ENCODE measurements at regions of chr2 and their contacts with region 1.

Region 1: GRCh38 chr2:80073134-80073561 is 231.4 kb downstream of the LRRTM1 start:
- DNase-seq: peak; percentile 73
- ATAC-seq: peak; percentile 67
- H3K4me3 ChIP-seq: no peak overlapping the region
- H3K27ac ChIP-seq: no peak overlapping the region
- H3K4me1 ChIP-seq: peaks cover 6% of the 10 kb centered on the region
- H3K27me3 ChIP-seq: no peaks in the 10 kb centered on the region
- CTCF ChIP-seq: peak; percentile 83
- POLR2A ChIP-seq: no peak
- RAD21 ChIP-seq: peak; percentile 91

Region 2: DNA sequence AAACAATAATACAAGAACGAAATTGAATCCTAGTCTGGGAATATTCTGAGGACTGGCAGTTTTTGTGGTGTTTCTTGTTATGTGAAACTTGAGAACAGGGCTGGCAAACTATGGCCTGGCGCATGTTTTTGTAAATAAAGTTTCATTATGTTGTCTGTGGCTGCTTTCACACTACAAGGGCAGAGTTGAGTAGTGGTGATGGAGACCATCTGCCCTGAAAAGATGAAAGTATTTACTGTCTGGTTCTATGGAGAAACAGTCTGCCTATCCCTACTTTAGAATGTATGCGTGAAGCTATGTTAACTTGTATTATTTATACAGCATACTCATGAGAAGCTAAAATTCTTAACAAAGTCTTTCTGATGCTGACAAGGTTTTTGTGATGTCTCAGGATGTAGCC is 120.5 kb before region 1 on chr2:
- CTCF ChIA-PET with region 1: no interaction called
- POLR2A ChIA-PET with region 1: no interaction called
- dilution Hi-C with region 1: no loop called
- in situ Hi-C with region 1: no loop called
- intact Hi-C with region 1: loop called (anchors 5 kb)
- DNase-seq: peak; percentile 51
- ATAC-seq: peak; percentile 79
- H3K4me3 ChIP-seq: no peak overlapping the region
- H3K27ac ChIP-seq: peak overlapping the region; percentile 96; the same call in 1 of the 2 replicates
- H3K4me1 ChIP-seq: peaks cover 12% of the 10 kb centered on the region
- H3K27me3 ChIP-seq: peaks cover 2% of the 10 kb centered on the region; the same call in 1 of the 2 replicates
- CTCF ChIP-seq: no peak
- POLR2A ChIP-seq: no peak
- RAD21 ChIP-seq: no peak

Region 3: DNA sequence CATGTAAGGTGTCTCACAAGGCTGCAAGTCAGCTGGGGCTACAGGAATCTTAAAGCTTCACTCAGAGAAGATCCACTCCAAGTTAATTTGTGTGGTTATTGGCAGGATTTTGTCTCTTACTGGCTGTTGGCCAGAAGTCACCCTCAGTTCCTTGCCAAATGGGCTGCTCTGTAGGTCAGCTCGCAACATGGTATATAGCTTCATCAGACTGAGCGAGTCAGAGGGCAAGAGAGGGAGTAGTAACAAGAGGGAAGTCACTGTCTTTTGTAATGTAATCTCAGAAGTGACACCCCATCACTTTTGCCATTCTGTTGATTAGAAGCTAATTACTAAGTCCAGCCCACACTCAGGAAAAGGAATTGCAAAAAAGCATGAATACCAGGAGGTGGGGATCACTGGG is 111.9 kb after region 1 on chr2:
- CTCF ChIA-PET with region 1: no interaction called
- POLR2A ChIA-PET with region 1: no interaction called
- dilution Hi-C with region 1: no loop called
- in situ Hi-C with region 1: no loop called
- intact Hi-C with region 1: no loop called
- DNase-seq: no peak
- ATAC-seq: no peak
- H3K4me3 ChIP-seq: no peak overlapping the region
- H3K27ac ChIP-seq: no peak overlapping the region
- H3K4me1 ChIP-seq: no peaks in the 10 kb centered on the region
- H3K27me3 ChIP-seq: no peaks in the 10 kb centered on the region
- CTCF ChIP-seq: no peak
- POLR2A ChIP-seq: no peak
- RAD21 ChIP-seq: no peak

Region 4: DNA sequence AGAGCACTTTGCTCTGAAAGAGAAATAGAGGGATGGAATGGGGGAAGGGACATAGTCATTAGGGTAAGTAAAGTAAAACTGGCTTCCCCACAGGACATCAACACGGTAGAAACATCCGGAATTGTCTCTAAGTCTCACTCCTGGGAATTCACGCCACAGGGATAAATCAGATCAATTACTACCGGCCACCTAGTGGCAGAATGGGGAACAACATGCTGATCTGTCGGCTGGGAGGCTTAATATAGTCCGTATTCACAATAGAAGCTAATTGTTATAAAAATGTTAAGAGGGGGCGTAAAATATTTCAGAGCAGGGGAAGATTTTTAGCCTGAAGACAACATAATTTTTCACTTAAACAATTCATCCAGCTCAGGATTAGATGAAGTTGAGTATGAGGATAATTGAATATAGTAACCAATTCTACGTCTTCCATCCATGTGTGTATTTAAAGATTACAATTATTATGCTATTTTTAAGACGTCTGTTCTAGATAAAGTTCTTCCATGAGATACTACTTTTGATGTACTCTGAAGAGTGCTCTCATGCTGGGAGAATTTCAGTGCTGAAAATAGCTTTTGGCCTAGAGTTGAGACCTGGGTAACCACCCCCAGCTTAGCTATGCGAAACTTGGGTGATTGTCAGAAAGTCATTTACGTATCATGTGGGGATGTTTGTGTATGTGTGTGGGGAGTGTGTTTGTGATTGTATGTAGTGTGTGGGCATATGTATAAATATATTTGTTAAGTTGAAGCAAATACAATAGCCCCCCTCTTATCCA is 165.7 kb after region 1 on chr2:
- CTCF ChIA-PET with region 1: interaction called, 27 read pairs
- POLR2A ChIA-PET with region 1: no interaction called
- dilution Hi-C with region 1: no loop called
- in situ Hi-C with region 1: no loop called
- intact Hi-C with region 1: loop called (anchors 1 kb)
- DNase-seq: peak; percentile 42
- ATAC-seq: peak; percentile 85
- H3K4me3 ChIP-seq: no peak overlapping the region
- H3K27ac ChIP-seq: no peak overlapping the region
- H3K4me1 ChIP-seq: no peaks in the 10 kb centered on the region
- H3K27me3 ChIP-seq: peaks cover 2% of the 10 kb centered on the region
- CTCF ChIP-seq: peak; percentile 77
- POLR2A ChIP-seq: no peak
- RAD21 ChIP-seq: peak; percentile 70

Region 5: DNA sequence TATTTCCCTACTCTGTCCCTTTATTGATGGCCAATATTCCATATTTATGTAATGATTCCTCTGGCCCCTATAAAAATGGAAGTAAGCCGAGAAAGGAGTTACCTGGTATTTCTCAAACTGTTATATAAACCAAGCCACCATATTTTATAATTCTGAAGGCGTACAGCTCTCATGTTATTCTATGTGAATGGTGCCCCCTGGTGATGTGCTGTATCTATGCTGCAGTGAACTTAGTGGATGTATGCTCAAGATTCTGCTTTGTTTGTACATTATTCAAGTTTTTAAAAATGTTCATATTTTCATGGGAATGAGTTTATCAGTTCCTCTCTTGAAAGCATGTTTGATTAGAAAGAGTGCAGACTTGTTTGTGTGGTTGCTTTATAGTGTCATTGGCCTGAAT is 425.9 kb after region 1 on chr2:
- CTCF ChIA-PET with region 1: interaction called, 4 read pairs
- POLR2A ChIA-PET with region 1: no interaction called
- dilution Hi-C with region 1: no loop called
- in situ Hi-C with region 1: loop called (anchors 25 kb)
- intact Hi-C with region 1: loop called (anchors 2 kb)
- DNase-seq: peak; percentile 65
- ATAC-seq: peak; percentile 72; the same call in 1 of the 2 replicates
- H3K4me3 ChIP-seq: no peak overlapping the region
- H3K27ac ChIP-seq: no peak overlapping the region
- H3K4me1 ChIP-seq: peaks cover 4% of the 10 kb centered on the region; the same call in 1 of the 2 replicates
- H3K27me3 ChIP-seq: no peaks in the 10 kb centered on the region
- CTCF ChIP-seq: peak; percentile 78
- POLR2A ChIP-seq: no peak
- RAD21 ChIP-seq: peak; percentile 76

Region 6: GRCh38 chr2:80519699-80520291 is 446.6 kb after region 1 on chr2:
- CTCF ChIA-PET with region 1: no interaction called
- POLR2A ChIA-PET with region 1: no interaction called
- dilution Hi-C with region 1: no loop called
- in situ Hi-C with region 1: loop called (anchors 25 kb)
- intact Hi-C with region 1: no loop called
- DNase-seq: no peak
- ATAC-seq: no peak
- H3K4me3 ChIP-seq: no peak overlapping the region
- H3K27ac ChIP-seq: no peak overlapping the region
- H3K4me1 ChIP-seq: no peaks in the 10 kb centered on the region
- H3K27me3 ChIP-seq: no peaks in the 10 kb centered on the region
- CTCF ChIP-seq: no peak
- POLR2A ChIP-seq: no peak
- RAD21 ChIP-seq: no peak

Measured in IMR-90 (cell line).